CD8-positive, alpha-beta T cell (primary cell): ENCODE measurements at regions of chr3 and their contacts with region 1.

Region 1: GRCh38 chr3:39000008-39000450 is 51.7 kb downstream of the SCN11A start:
- DNase-seq: peak in 2 of 9 experiments; percentile 41 to 56
- ATAC-seq: no peak
- H3K4me3 ChIP-seq: no peak overlapping the region
- H3K4me3 Mint-ChIP-seq: no peak overlapping the region
- H3K27ac ChIP-seq: no peak overlapping the region
- H3K27ac Mint-ChIP-seq: no peak overlapping the region
- H3K4me1 ChIP-seq: no peaks in the 10 kb centered on the region
- H3K4me1 Mint-ChIP-seq: no peaks in the 10 kb centered on the region
- H3K27me3 ChIP-seq: no peaks in the 10 kb centered on the region
- H3K27me3 Mint-ChIP-seq: peaks cover 16% of the 10 kb centered on the region
- CTCF ChIP-seq: peak; percentile 60

Region 2: GRCh38 chr3:38834110-38834509 is 165.9 kb before region 1 on chr3:
- CTCF ChIA-PET with region 1: no interaction called
- POLR2A ChIA-PET with region 1: no interaction called
- intact Hi-C with region 1: no loop called
- DNase-seq: peak in 5 of 9 experiments; percentile 6 to 60 (median 12)
- ATAC-seq: no peak
- H3K4me3 ChIP-seq: no peak overlapping the region
- H3K4me3 Mint-ChIP-seq: no peak overlapping the region
- H3K27ac ChIP-seq: no peak overlapping the region
- H3K27ac Mint-ChIP-seq: no peak overlapping the region
- H3K4me1 ChIP-seq: no peaks in the 10 kb centered on the region
- H3K4me1 Mint-ChIP-seq: peaks cover 9% of the 10 kb centered on the region
- H3K27me3 ChIP-seq: no peaks in the 10 kb centered on the region
- H3K27me3 Mint-ChIP-seq: no peaks in the 10 kb centered on the region
- CTCF ChIP-seq: no peak

Region 3: GRCh38 chr3:39011191-39011736 is 11.2 kb after region 1 on chr3:
- CTCF ChIA-PET with region 1: interaction called, 10 read pairs
- POLR2A ChIA-PET with region 1: interaction called, 3 read pairs
- intact Hi-C with region 1: no loop called
- DNase-seq: no peak
- ATAC-seq: no peak
- H3K4me3 ChIP-seq: no peak overlapping the region
- H3K4me3 Mint-ChIP-seq: no peak overlapping the region
- H3K27ac ChIP-seq: no peak overlapping the region
- H3K27ac Mint-ChIP-seq: no peak overlapping the region
- H3K4me1 ChIP-seq: no peaks in the 10 kb centered on the region
- H3K4me1 Mint-ChIP-seq: no peaks in the 10 kb centered on the region
- H3K27me3 ChIP-seq: peaks cover 0 to 3% of the 10 kb centered on the region in 2 experiments
- H3K27me3 Mint-ChIP-seq: peaks cover 12% of the 10 kb centered on the region
- CTCF ChIP-seq: no peak

Region 4: DNA sequence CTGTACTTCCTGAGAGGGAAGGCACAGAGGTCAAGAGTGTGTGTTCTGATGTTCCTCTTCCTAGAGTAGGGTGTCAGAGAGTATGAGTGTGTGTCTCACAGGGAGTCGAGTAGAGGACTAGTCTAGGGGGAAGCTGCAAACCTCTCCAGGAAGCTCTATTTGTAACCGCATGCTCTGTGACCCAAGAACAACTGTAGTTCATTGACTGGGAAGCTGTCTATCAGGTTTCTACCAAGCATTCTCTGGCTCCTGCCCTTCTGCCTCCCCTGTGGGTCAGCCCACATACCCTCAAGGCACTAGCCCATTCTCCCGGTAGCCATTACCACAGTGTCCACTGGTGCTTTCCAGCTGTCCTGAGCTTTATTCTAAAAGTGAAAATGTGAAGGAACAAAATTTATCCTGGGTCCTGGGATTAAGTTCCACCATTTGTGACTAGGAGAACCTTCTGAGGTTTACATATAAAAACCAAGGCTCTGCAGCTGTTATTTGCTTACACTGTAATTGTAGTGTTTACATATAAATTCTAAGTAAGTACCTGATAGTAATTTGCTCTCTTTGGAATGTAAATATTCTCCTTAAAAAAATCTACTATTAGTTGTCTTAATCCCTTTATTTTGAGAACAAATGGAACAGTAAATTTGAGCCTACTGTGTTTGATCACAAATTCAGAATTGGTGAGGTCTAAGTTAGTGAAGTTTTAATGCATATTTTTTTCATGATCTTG is 850.1 kb after region 1 on chr3:
- CTCF ChIA-PET with region 1: no interaction called
- POLR2A ChIA-PET with region 1: no interaction called
- intact Hi-C with region 1: no loop called
- DNase-seq: no peak
- ATAC-seq: no peak
- H3K4me3 ChIP-seq: no peak overlapping the region
- H3K4me3 Mint-ChIP-seq: no peak overlapping the region
- H3K27ac ChIP-seq: no peak overlapping the region
- H3K27ac Mint-ChIP-seq: no peak overlapping the region
- H3K4me1 ChIP-seq: no peaks in the 10 kb centered on the region
- H3K4me1 Mint-ChIP-seq: no peaks in the 10 kb centered on the region
- H3K27me3 ChIP-seq: no peaks in the 10 kb centered on the region
- H3K27me3 Mint-ChIP-seq: peaks cover 5% of the 10 kb centered on the region
- CTCF ChIP-seq: no peak